Right ventricle myocardium inferior (tissue), 1 donor: ENCODE measurements at regions of chr18 and their contacts with region 1.

Region 1: GRCh38 chr18:48842259-48843061 is 108.3 kb downstream of the SMAD7 start:
- DNase-seq: no peak
- ATAC-seq: peak; percentile 40

Region 2: DNA sequence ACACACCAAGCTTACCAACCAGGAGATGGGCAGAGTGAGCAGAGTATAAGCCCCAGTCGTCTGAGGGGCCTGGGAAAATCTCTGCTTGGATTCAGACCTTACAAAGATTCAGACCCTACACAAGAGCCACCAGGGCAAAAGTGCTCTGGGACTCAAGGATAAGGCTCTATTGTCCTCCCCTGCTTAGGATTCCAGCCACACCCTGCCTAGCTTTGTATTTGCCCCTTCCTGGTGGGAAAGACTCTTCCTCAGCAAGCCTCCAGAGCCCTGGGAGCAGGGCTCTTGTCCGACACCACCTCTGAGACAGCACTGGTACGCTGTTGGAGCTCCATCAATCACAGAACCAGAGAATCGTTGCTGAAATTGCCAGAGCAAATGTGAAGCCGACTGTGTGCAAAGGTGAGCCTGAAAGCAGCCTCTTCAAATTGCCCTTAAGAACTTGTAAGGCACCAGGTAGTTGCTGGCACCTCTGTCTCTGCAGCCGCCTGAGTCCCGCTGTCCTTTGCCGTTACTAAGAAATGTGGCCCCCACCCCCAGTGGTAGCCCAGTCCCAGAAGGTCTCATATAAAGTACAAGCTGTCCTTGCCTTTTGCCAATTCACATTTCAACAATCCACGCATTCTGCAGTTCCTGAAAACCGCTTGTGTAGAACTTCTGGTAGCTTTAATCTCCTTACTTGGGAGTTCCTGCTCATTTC is 155.0 kb before region 1 on chr18:
- intact Hi-C with region 1: loop called (anchors 5 kb)
- DNase-seq: no peak
- ATAC-seq: no peak

Region 3: GRCh38 chr18:48767090-48767690 is 75.3 kb before region 1 on chr18:
- intact Hi-C with region 1: no loop called
- DNase-seq: no peak
- ATAC-seq: peak; percentile 85

Region 4: GRCh38 chr18:48790226-48790874 is 52.1 kb before region 1 on chr18:
- intact Hi-C with region 1: loop called (anchors 2 kb)
- DNase-seq: peak; percentile 90
- ATAC-seq: peak; percentile 73

Region 5: DNA sequence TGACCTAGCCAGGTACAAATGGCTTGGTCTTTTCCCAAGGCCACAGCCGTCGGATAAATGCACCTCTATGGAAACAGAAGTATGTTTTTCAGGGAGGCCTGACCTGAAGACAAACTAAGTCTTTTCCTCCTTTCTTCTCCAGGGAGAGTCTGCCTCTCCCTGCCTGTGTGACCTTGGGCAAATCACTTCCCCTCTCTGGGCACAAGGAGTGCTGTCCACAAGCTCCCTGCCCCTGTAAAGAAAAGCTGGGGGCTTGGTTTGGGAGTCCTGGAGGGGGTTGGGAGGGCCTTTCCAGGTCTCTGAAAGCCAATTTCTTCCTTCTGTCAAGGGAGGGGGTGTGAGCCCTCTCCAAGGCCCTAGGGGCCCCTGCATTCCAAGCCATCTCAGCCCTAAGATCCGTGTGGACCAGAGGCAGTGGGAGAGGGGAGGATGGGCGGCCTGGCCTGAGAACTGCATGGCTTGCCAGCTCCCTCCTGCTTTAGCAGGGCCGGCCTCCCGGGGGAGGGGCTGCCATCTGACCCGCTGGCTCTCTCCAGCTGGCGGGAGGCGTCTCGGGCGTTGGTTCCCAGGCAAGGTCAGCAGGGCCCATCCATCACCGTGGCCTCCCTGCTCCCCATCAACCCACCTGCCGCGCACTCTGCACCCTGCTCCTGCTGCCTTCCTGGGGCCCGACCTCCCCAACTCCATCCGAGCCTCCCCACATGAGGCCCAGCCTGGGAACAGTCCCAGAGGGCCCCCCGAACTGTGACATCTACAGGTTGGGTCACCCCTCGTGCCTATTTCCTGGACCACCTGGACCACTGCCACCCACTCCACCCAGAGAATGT is 46.9 kb after region 1 on chr18:
- intact Hi-C with region 1: loop called (anchors 5 kb)
- DNase-seq: no peak
- ATAC-seq: no peak